GM12878 (cell line): ENCODE measurements at regions of chr5 and their contacts with region 1.

Region 1: DNA sequence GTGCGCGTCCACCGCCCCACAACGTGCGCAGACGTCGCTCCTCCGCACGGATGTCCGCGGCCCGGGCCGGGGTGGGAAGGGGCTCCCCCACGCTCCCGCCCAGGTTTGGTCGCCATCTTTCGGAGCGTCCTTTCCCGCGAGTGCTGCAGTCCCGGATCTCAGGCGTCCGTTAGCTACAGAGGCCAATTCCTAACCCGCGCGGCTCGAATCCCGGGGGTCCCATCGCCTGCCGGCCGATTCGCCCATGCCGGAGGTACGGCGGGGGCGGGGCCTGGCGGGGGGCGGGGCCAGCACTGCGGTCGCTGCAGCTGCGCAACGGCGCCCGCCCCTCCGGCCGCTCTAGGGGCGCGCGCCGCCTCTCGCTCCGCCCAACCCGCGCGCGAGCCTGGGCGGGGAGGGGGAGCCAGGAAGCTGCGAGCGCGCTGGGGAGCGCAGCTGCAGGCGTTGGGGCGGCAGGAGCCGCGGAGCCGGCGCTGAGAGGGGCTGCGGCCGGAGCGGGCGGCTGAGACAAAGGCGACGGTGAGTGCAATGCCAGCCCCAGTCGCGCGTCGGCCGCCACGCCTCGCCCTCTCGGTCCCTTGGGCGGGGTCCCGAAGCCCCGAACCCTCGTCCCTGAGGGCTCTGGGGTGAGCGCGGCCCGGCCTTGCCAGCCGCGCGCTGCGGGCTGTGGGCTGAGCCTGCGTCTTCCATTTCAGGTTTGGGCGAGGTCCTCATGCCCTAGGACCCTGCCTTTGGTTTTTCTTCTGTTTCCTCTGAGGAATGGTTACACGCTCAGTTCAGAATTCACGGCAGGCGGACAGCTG is at the start of gene CDC42SE2:
- DNase-seq: no peak
- ATAC-seq: peak; percentile 86
- H3K4me3 ChIP-seq: peak within 1 kb of the TSS; percentile 86
- H3K27ac ChIP-seq: peak within 1 kb of the TSS; percentile 96
- H3K4me1 ChIP-seq: peaks cover 2% of the 10 kb centered on the region
- H3K27me3 ChIP-seq: no peaks in the 10 kb centered on the region
- CTCF ChIP-seq: no peak
- EP300 ChIP-seq: no peak
- POLR2A ChIP-seq: peak; percentile 98
- RAD21 ChIP-seq: 0 out of 2 replicates have a peak, but pooled peaks have one; percentile 14
- polyA plus RNA-seq, gene CDC42SE2: 57.0 to 78.8 TPM

Region 2: DNA sequence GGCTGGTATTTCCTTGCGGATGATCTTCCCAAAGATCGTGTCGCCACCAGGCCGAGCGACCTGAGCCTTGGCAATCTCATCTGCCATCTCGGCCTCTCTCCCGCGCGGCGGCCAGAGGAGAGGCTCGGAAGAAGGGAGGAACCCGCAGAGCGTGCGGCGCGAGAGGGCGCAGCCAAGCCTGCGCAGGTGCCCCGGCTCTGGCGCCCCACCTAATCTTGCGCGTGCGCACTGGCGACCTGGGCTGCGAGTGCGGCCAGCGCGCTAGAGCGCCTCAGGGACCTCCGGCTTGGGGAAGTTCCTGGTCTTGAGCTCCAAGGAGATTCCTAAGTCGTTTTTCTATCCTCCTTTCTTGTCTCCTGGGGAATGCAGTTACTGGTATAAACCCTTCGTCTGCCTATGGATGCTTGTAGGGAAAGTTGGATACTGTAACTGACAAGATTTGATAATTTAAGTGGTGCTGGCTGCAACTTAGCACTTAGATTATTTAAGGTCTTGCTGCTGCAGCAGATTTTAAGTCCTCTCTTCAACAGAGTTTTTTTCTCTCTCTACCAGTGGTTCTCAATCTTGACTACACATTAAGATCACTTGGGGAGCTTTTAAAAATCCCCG is 98.6 kb before region 1 on chr5 and contains the start of gene HINT1:
- CTCF ChIA-PET with region 1: interaction called, 6 read pairs
- POLR2A ChIA-PET with region 1: interaction called, 10 read pairs
- RAD21 ChIA-PET with region 1: interaction called, 15 read pairs
- SMC1A ChIA-PET with region 1: interaction called, 18 read pairs
- in situ Hi-C with region 1: no loop called
- intact Hi-C with region 1: loop called (anchors 2 kb)
- DNase-seq: peak; percentile 75
- ATAC-seq: peak; percentile 90
- H3K4me3 ChIP-seq: peak within 1 kb of the TSS; percentile 92
- H3K27ac ChIP-seq: peak within 1 kb of the TSS; percentile 86
- H3K4me1 ChIP-seq: peaks cover 3% of the 10 kb centered on the region; the same call in 1 of the 2 replicates
- H3K27me3 ChIP-seq: no peaks in the 10 kb centered on the region
- CTCF ChIP-seq: peak in 2 of 3 experiments; percentile 18 to 45; a peak in 4 of 6 replicates
- EP300 ChIP-seq: no peak
- POLR2A ChIP-seq: peak; percentile 85
- RAD21 ChIP-seq: peak; percentile 38; the same call in 1 of the 2 replicates
- polyA plus RNA-seq, gene HINT1: 844 to 901 TPM

Region 3: DNA sequence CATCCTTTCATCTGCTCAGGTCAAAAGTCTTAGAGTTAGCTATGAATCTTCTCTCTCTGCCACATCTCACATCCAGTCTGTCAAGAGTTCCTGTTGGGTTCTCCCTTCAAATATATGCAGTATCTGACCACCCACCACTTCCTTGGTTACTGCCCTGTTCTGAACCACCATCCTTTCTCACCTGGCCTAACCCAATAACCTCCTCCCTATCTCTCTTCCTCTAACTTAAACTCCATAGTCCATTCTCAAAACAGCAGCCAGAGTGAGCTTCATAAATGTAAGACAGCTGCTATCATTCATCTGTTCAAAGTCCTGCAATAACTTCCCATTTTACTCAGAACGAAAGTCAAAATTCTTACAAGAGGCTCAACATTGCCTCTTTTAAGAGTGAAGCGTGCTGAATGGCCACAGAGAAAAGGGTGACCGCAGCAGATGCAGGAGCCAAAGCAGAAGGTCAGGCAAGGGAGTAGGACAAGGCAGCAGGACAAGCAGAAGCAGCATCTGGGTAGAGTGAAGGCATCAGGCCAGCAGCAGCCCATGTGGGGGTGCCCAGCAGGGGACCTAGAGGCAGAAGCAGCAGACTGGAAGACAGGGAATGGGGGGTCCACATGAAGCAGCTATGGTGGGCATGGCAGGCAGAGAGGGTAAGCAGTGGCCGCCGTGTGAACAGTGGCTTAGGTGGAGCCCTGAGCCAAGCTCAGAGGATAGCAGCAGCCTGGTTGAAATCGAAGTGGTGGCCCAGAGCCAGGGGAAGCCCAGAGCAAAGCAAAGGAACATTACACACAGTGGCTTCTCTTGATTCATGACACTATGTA is 39.3 kb before region 1 on chr5:
- CTCF ChIA-PET with region 1: interaction called, 65 read pairs
- POLR2A ChIA-PET with region 1: interaction called, 309 read pairs
- RAD21 ChIA-PET with region 1: interaction called, 161 read pairs
- SMC1A ChIA-PET with region 1: interaction called, 1,218 read pairs
- in situ Hi-C with region 1: no loop called
- intact Hi-C with region 1: loop called (anchors 1 kb)
- DNase-seq: peak; percentile 96
- ATAC-seq: peak; percentile 82
- H3K4me3 ChIP-seq: peak overlapping the region; percentile 64
- H3K27ac ChIP-seq: peak overlapping the region; percentile 78
- H3K4me1 ChIP-seq: peaks cover 30% of the 10 kb centered on the region
- H3K27me3 ChIP-seq: no peaks in the 10 kb centered on the region
- CTCF ChIP-seq: no peak
- EP300 ChIP-seq: peak; percentile 94 to 96
- POLR2A ChIP-seq: peak; percentile 75
- RAD21 ChIP-seq: no peak; the same call in 1 of the 2 replicates

Region 4: DNA sequence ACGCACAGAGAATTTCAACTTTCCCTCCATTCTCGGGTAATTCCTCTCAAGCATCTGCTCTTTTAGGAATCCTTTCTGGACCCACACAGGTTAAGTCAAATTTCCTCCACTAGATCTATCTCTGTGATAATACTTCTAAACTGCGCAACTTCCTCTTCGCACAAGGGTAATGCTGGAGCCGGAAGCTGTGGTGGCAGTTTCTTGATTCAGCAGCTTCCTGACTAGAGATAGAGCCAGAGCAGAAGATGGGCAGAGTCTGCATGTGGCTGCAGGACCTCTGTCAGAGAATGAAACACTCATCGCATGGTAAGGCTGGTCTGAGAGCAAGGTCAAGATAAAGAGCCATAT is 11.1 kb before region 1 on chr5:
- CTCF ChIA-PET with region 1: interaction called, 10 read pairs
- POLR2A ChIA-PET with region 1: interaction called, 78 read pairs
- RAD21 ChIA-PET with region 1: interaction called, 101 read pairs
- SMC1A ChIA-PET with region 1: interaction called, 180 read pairs
- in situ Hi-C with region 1: no loop called
- intact Hi-C with region 1: no loop called
- DNase-seq: peak; percentile 81
- ATAC-seq: peak; percentile 79
- H3K4me3 ChIP-seq: peak overlapping the region; percentile 38; the same call in 1 of the 2 replicates
- H3K27ac ChIP-seq: peak overlapping the region; percentile 80
- H3K4me1 ChIP-seq: peaks cover 46% of the 10 kb centered on the region
- H3K27me3 ChIP-seq: no peaks in the 10 kb centered on the region
- CTCF ChIP-seq: no peak
- EP300 ChIP-seq: 0 out of 4 replicates have a peak, but pooled peaks of 1 of the 2 experiments have one; percentile 30
- POLR2A ChIP-seq: peak; percentile 72
- RAD21 ChIP-seq: 0 out of 2 replicates have a peak, but pooled peaks have one; percentile 14

Region 5: GRCh38 chr5:131328536-131329285 is 64.9 kb after region 1 on chr5:
- CTCF ChIA-PET with region 1: no interaction called
- POLR2A ChIA-PET with region 1: interaction called, 3 read pairs
- RAD21 ChIA-PET with region 1: interaction called, 4 read pairs
- SMC1A ChIA-PET with region 1: interaction called, 11 read pairs
- in situ Hi-C with region 1: no loop called
- intact Hi-C with region 1: no loop called
- DNase-seq: no peak
- ATAC-seq: peak; percentile 36
- H3K4me3 ChIP-seq: no peak overlapping the region
- H3K27ac ChIP-seq: peak overlapping the region; percentile 15; the same call in 1 of the 2 replicates
- H3K4me1 ChIP-seq: peaks cover 3% of the 10 kb centered on the region; the same call in 1 of the 2 replicates
- H3K27me3 ChIP-seq: no peaks in the 10 kb centered on the region
- CTCF ChIP-seq: no peak
- EP300 ChIP-seq: no peak
- POLR2A ChIP-seq: no peak
- RAD21 ChIP-seq: no peak

Region 6: GRCh38 chr5:131382407-131383395 is 118.9 kb after region 1 on chr5:
- CTCF ChIA-PET with region 1: interaction called, 53 read pairs
- POLR2A ChIA-PET with region 1: interaction called, 28 read pairs
- RAD21 ChIA-PET with region 1: interaction called, 145 read pairs
- SMC1A ChIA-PET with region 1: interaction called, 67 read pairs
- in situ Hi-C with region 1: no loop called
- intact Hi-C with region 1: loop called (anchors 2 kb)
- DNase-seq: peak; percentile 71
- ATAC-seq: peak; percentile 74
- H3K4me3 ChIP-seq: no peak overlapping the region
- H3K27ac ChIP-seq: peak overlapping the region; percentile 95
- H3K4me1 ChIP-seq: peaks cover 57% of the 10 kb centered on the region
- H3K27me3 ChIP-seq: no peaks in the 10 kb centered on the region
- CTCF ChIP-seq: peak; percentile 67 to 83 (median 69)
- EP300 ChIP-seq: 0 out of 4 replicates have a peak, but pooled peaks of 1 of the 2 experiments have one; percentile 2
- POLR2A ChIP-seq: no peak
- RAD21 ChIP-seq: peak; percentile 79

Region 7: GRCh38 chr5:131706281-131706680 is 442.4 kb after region 1 on chr5:
- CTCF ChIA-PET with region 1: no interaction called
- POLR2A ChIA-PET with region 1: no interaction called
- RAD21 ChIA-PET with region 1: no interaction called
- SMC1A ChIA-PET with region 1: no interaction called
- in situ Hi-C with region 1: no loop called
- intact Hi-C with region 1: no loop called
- DNase-seq: no peak
- ATAC-seq: no peak
- H3K4me3 ChIP-seq: no peak overlapping the region
- H3K27ac ChIP-seq: no peak overlapping the region
- H3K4me1 ChIP-seq: no peaks in the 10 kb centered on the region
- H3K27me3 ChIP-seq: no peaks in the 10 kb centered on the region
- CTCF ChIP-seq: no peak
- EP300 ChIP-seq: no peak
- POLR2A ChIP-seq: no peak
- RAD21 ChIP-seq: no peak